Activated CD8-positive, alpha-beta T cell treated with anti-CD3 and anti-CD28 coated beads, Interleukin-2, amount 10 ng/mL, durations not matched to agents 7 days and 5 days (primary cell): ENCODE measurements at regions of chr6 and their contacts with region 1.

Region 1: DNA sequence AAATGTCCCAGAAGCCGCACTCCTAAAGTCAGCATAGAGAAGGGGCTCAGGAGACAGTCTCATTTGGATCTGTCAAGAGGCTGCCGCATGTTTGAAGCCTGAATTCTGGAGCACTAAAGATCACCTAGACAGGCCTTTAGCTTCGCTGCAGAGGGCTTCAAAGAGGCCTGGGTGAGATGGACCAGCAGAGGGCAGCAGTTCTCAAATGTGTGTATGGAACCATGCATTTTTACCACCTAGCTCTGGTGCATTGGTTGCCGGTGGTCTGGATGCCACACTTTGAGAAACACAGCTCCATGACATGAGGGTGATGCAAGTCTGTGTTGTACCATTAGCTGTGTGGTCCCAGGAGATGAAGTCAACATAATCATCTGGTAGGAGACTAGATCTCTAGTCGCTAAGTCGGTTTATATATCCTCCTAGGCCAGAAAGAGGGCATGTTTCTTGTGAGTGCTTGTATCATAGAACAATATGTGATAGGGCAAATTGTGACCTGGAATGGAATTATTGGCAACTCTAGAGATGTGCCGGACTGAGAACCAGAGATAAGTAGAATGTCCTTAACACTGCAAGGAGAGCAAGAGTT is 64.8 kb downstream of the KIAA0319 start:
- DNase-seq: peak; percentile 86
- ATAC-seq: peak; percentile 88
- H3K4me3 Mint-ChIP-seq: no peak overlapping the region
- H3K27ac Mint-ChIP-seq: no peak overlapping the region
- H3K4me1 Mint-ChIP-seq: peaks cover 6% of the 10 kb centered on the region
- H3K27me3 Mint-ChIP-seq: peaks cover 16% of the 10 kb centered on the region

Region 2: DNA sequence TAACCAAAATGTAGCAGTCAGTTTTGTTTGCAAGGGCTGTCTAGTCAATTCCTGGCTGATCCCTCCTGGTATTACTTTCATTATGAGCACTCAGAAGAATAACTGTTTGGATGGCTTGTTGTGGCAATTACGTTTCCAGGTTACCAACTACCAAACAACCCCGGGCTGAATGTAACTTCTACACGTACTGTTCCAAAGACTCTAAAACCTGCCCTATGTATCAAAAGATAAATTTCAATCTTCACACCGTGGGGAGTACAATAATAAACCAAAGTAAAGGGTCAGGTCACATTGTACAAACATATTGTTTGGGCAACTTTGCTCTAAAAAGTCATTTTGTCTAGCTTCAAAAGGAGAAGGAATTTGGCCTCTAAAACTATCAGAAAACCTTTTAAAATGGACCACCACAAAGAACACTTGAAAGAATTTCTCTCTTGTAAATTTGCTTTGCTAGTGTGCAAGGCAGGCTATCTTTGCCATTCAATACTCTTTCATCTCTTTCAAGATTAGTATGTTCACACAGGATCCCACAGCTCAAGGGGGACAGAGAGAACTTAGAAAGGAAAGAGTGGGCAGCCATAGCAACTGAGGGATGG is 250.9 kb before region 1 on chr6:
- CTCF ChIA-PET with region 1: no interaction called
- POLR2A ChIA-PET with region 1: no interaction called
- DNase-seq: no peak
- ATAC-seq: no peak
- H3K4me3 Mint-ChIP-seq: no peak overlapping the region
- H3K27ac Mint-ChIP-seq: no peak overlapping the region
- H3K4me1 Mint-ChIP-seq: no peaks in the 10 kb centered on the region
- H3K27me3 Mint-ChIP-seq: peaks cover 3% of the 10 kb centered on the region

Region 3: DNA sequence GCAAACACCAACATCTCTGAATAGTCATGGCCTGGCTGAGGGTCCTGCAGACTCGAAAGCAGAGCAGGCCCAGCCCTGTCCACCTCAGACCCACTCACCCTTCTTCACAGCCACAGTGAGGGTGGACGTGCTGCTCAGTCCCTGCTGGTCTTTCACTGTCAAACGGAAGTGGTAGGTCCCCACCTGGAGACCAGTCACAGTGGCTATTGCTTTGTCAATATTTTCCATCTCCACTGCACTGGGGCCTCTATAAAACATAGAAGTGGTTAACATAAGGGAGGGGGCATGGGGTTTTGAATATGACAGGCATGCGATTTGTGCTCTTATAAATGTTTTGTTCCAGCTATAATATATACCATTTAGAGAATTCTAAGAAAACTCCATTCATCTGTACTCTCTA is 12.5 kb before region 1 on chr6:
- CTCF ChIA-PET with region 1: interaction called, 14 read pairs
- POLR2A ChIA-PET with region 1: no interaction called
- DNase-seq: no peak
- ATAC-seq: no peak
- H3K4me3 Mint-ChIP-seq: no peak overlapping the region
- H3K27ac Mint-ChIP-seq: no peak overlapping the region
- H3K4me1 Mint-ChIP-seq: no peaks in the 10 kb centered on the region
- H3K27me3 Mint-ChIP-seq: peaks cover 10% of the 10 kb centered on the region

Region 4: DNA sequence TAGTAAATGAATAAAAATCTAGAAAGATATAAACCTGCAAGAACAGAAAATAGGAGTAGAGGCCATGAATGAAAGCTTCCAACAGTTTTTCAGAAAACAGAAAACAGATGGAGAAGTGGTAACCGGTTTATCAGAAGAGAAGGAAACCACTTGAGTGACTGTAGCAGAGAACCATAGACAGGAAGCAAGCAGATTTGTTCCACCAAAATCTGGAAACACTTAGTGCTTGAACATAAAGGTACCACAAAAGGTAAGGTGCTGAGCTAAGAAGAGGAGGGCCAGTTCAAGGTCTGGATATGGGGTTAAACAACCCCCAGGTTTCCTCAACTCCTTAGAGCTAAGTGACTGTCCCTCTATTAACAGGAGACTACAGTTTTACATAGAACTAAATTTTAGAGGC is 74.0 kb after region 1 on chr6:
- CTCF ChIA-PET with region 1: interaction called, 13 read pairs
- POLR2A ChIA-PET with region 1: no interaction called
- DNase-seq: no peak
- ATAC-seq: peak; percentile 73
- H3K4me3 Mint-ChIP-seq: no peak overlapping the region
- H3K27ac Mint-ChIP-seq: peak overlapping the region; percentile 17
- H3K4me1 Mint-ChIP-seq: peaks cover 12% of the 10 kb centered on the region
- H3K27me3 Mint-ChIP-seq: no peaks in the 10 kb centered on the region

Region 5: DNA sequence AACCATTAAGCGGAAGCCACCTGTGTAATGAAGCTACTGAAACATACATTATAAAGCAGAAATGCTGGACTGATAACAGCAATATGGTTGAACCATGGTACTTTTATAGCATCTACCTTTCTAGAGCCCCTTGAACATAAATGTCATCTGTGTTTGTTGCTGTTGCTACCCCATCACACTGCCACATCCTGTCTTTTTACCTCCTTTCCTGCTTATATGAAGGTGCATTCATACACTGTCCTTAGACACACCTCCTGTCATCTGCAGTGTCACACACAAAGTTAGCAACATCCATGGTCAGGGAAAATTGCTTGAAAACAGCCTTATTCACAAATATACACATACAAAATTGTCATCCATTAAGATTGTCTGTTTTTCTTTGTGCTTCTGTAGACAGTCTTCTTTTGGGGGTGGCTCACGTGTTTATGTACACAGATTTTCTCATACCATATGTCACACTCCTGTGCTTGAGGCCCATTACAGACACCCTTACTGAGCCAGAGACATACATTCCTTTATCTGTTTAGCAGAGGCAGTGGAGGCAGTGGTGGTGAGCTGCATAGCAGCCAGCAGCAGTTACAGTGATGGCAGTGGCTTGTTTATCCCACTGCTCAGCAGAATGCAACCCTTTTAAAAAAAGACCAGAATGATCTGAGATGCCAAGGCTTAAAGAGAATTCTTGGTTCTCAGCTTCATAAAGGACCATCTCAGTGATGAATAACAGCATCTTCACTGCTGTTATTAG is 111.8 kb after region 1 on chr6:
- CTCF ChIA-PET with region 1: interaction called, 27 read pairs
- POLR2A ChIA-PET with region 1: no interaction called
- DNase-seq: peak; percentile 35
- ATAC-seq: peak; percentile 64
- H3K4me3 Mint-ChIP-seq: no peak overlapping the region
- H3K27ac Mint-ChIP-seq: peak overlapping the region; percentile 22
- H3K4me1 Mint-ChIP-seq: peaks cover 11% of the 10 kb centered on the region
- H3K27me3 Mint-ChIP-seq: no peaks in the 10 kb centered on the region

Region 6: GRCh38 chr6:24766680-24767462 is 185.7 kb after region 1 on chr6:
- CTCF ChIA-PET with region 1: interaction called, 46 read pairs
- POLR2A ChIA-PET with region 1: no interaction called
- DNase-seq: no peak
- ATAC-seq: peak; percentile 60
- H3K4me3 Mint-ChIP-seq: no peak overlapping the region
- H3K27ac Mint-ChIP-seq: no peak overlapping the region
- H3K4me1 Mint-ChIP-seq: peaks cover 3% of the 10 kb centered on the region
- H3K27me3 Mint-ChIP-seq: no peaks in the 10 kb centered on the region